ENCODE measurements at regions of chrX and their contacts with region 1.

Region 1: GRCh38 chrX:154774622-154775021 is 12.0 kb downstream of the DKC1 start:
- DNase-seq: no peak
- H3K4me3 ChIP-seq: no peak overlapping the region
- H3K27ac ChIP-seq: no peak overlapping the region
- H3K4me1 ChIP-seq: no peaks in the 10 kb centered on the region
- H3K27me3 ChIP-seq: no peaks in the 10 kb centered on the region
- CTCF ChIP-seq: no peak

Region 2: GRCh38 chrX:154714925-154715324 is 59.7 kb before region 1 on chrX:
- CTCF ChIA-PET with region 1: no interaction called
- dilution Hi-C with region 1: loop called (anchors 5 kb)
- in situ Hi-C with region 1: no loop called
- intact Hi-C with region 1: no loop called
- DNase-seq: no peak
- H3K4me3 ChIP-seq: no peak overlapping the region
- H3K27ac ChIP-seq: no peak overlapping the region
- H3K4me1 ChIP-seq: peaks cover 17% of the 10 kb centered on the region
- H3K27me3 ChIP-seq: no peaks in the 10 kb centered on the region
- CTCF ChIP-seq: peak; percentile 80 to 87

Measured in mammary epithelial cell (primary cell).